Endothelial cell of umbilical vein (primary cell): ENCODE measurements at regions of chr22 and their contacts with region 1.

Region 1: DNA sequence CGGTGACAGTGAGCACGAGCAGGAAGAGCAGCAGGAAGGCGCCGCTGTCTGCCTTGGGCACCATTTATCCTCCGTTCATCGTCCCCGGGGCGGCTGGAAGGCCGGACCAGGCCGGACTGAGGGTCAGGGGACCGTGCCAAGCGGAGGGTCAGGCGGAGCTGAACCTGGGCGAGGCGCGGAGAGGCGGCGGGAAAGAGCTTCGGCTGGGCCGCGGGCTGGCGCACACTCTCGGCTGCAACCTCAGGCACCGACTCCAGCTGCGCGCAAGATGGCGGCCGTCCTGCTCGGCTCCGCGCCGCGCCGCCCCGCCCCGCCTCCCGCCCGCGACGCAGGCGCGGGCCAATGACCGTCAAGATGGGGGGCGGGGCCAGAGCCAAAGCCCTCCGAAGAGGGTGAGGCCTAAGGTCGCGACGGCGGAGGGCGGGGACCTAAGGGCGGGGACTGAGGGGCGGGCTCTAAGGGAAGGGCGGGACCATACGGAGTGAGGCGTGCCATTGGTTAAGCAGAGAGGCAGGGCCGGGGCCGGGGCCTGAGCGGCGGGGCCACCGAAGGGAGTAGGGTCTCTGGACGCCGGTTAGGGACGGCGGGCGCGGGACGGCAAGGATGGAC is at the start of gene DGCR2:
- DNase-seq: peak; percentile 97
- H3K4me3 ChIP-seq: peak within 1 kb of the TSS; percentile 61 to 91 (median 80)
- H3K27ac ChIP-seq: peak within 1 kb of the TSS; percentile 4
- H3K4me1 ChIP-seq: peaks cover 9% of the 10 kb centered on the region
- H3K27me3 ChIP-seq: no peaks in the 10 kb centered on the region
- CTCF ChIP-seq: no peak
- POLR2A ChIP-seq: no peak
- total RNA-seq, gene DGCR2: 44.8 and 49.6 TPM in 2 replicates

Region 2: GRCh38 chr22:19060356-19061009 is 61.8 kb before region 1 on chr22:
- CTCF ChIA-PET with region 1: no interaction called
- POLR2A ChIA-PET with region 1: no interaction called
- dilution Hi-C with region 1: no loop called
- intact Hi-C with region 1: no loop called
- DNase-seq: no peak
- H3K4me3 ChIP-seq: no peak overlapping the region
- H3K27ac ChIP-seq: no peak overlapping the region
- H3K4me1 ChIP-seq: peaks cover 8% of the 10 kb centered on the region
- H3K27me3 ChIP-seq: no peaks in the 10 kb centered on the region
- CTCF ChIP-seq: no peak
- POLR2A ChIP-seq: no peak

Region 3: GRCh38 chr22:19085233-19085718 is 37.0 kb before region 1 on chr22:
- CTCF ChIA-PET with region 1: interaction called, 4 read pairs
- POLR2A ChIA-PET with region 1: no interaction called
- dilution Hi-C with region 1: no loop called
- intact Hi-C with region 1: loop called (anchors 2 kb)
- DNase-seq: peak; percentile 64
- H3K4me3 ChIP-seq: no peak overlapping the region
- H3K27ac ChIP-seq: peak overlapping the region; percentile 76
- H3K4me1 ChIP-seq: peaks cover 18% of the 10 kb centered on the region
- H3K27me3 ChIP-seq: no peaks in the 10 kb centered on the region
- CTCF ChIP-seq: peak; percentile 40 to 56
- POLR2A ChIP-seq: no peak